HepG2 (cell line): ENCODE measurements at regions of chr9 and their contacts with region 1.

Region 1: GRCh38 chr9:83622939-83623678 is at the start of gene IDNK:
- DNase-seq: peak; percentile 67
- ATAC-seq: peak; percentile 87
- H3K4me3 ChIP-seq: peak within 1 kb of the TSS; percentile 73 to 94 (median 80)
- H3K27ac ChIP-seq: peak within 1 kb of the TSS; percentile 97
- H3K4me1 ChIP-seq: peaks cover 49% of the 10 kb centered on the region
- H3K27me3 ChIP-seq: no peaks in the 10 kb centered on the region
- CTCF ChIP-seq: peak; percentile 12; the same call in 1 of the 2 replicates
- EP300 ChIP-seq: no peak
- POLR2A ChIP-seq: peak; percentile 64 to 71
- RAD21 ChIP-seq: no peak
- total RNA-seq, gene IDNK: 4.8 and 6.3 TPM in 2 replicates

Region 2: GRCh38 chr9:83334320-83334719 is 288.8 kb before region 1 on chr9:
- CTCF ChIA-PET with region 1: no interaction called
- POLR2A ChIA-PET with region 1: no interaction called
- in situ Hi-C with region 1: no loop called
- intact Hi-C with region 1: loop called (anchors 1 kb)
- DNase-seq: peak; percentile 64
- ATAC-seq: peak; percentile 92
- H3K4me3 ChIP-seq: no peak overlapping the region
- H3K27ac ChIP-seq: no peak overlapping the region
- H3K4me1 ChIP-seq: no peaks in the 10 kb centered on the region
- H3K27me3 ChIP-seq: no peaks in the 10 kb centered on the region
- CTCF ChIP-seq: peak; percentile 91
- EP300 ChIP-seq: 0 out of 4 replicates have a peak, but pooled peaks of 1 of the 2 experiments have one; percentile 4
- POLR2A ChIP-seq: no peak
- RAD21 ChIP-seq: peak; percentile 93

Region 3: GRCh38 chr9:83538172-83538889 is 84.8 kb before region 1 on chr9 and contains the start of gene FRMD3:
- CTCF ChIA-PET with region 1: no interaction called
- POLR2A ChIA-PET with region 1: no interaction called
- in situ Hi-C with region 1: no loop called
- intact Hi-C with region 1: no loop called
- DNase-seq: peak; percentile 73
- ATAC-seq: peak; percentile 98
- H3K4me3 ChIP-seq: peak within 1 kb of the TSS; percentile 72 to 85 (median 77)
- H3K27ac ChIP-seq: peak within 1 kb of the TSS; percentile 57
- H3K4me1 ChIP-seq: peaks cover 38% of the 10 kb centered on the region
- H3K27me3 ChIP-seq: no peaks in the 10 kb centered on the region; a peak in 1 of 5 replicates
- CTCF ChIP-seq: peak; percentile 90
- EP300 ChIP-seq: no peak
- POLR2A ChIP-seq: no peak; a peak in 1 of 4 replicates
- RAD21 ChIP-seq: peak; percentile 91
- total RNA-seq, gene FRMD3: 7.7 and 9.6 TPM in 2 replicates

Region 4: DNA sequence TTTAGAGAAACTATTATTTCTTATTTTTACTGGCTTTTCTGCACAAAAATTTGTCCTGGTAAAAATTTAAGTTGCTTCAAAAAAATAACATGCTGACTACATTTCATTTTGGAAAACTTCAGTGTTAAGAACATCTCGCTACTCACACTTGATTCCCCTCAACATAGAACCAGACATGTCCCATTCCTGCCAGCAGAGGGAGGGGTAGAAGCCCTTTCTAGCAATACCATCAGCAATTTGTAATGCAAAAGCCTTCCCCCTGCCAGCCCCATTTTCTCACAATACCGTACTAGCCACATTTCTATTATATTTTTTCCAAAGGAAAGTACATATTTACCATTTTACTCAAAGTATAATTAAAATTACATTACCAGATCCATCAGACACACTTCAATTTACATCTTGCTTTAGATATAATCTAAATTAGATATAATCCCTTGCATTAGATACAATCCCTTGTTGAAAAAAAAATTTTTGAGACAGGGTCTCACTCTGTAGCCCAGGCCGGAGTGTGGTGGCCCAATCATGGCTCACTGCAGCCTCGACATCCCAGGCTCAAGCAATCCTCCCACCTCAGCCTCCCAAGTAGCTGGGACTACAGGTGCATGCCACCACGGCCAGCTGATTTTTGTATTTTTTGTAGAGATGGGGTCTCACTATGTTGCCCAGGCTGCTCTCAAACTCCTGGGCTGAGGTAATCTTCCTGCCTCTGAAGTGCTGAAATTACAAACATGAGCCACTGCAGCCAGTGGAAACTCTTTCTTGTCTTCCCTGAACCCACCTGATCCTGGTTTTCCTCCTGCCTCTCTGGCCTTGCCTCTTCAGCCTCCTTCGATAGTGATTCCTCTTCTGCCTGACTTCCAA is 39.7 kb before region 1 on chr9:
- CTCF ChIA-PET with region 1: no interaction called
- POLR2A ChIA-PET with region 1: no interaction called
- in situ Hi-C with region 1: no loop called
- intact Hi-C with region 1: loop called (anchors 2 kb)
- DNase-seq: peak; percentile 47
- ATAC-seq: peak; percentile 90
- H3K4me3 ChIP-seq: no peak overlapping the region
- H3K27ac ChIP-seq: no peak overlapping the region
- H3K4me1 ChIP-seq: no peaks in the 10 kb centered on the region
- H3K27me3 ChIP-seq: no peaks in the 10 kb centered on the region
- CTCF ChIP-seq: peak; percentile 74
- EP300 ChIP-seq: no peak
- POLR2A ChIP-seq: no peak
- RAD21 ChIP-seq: no peak

Region 5: DNA sequence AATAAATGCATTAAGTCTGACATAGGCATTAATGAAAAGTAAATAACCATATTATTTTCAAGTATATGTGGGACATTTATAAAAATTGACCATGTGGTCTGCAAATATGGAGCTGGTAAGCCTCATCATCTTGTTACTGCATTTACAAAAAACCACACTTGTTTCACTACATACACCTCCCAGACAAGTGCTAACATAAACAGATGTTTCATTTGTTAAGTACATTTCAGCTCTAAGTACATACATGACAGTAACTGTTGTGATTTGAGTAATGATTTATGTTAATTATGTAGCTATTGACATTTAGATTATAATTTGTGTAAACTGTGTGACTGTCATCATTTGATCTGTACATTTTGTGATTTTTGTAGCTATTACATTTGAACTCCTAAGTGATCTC is 13.7 kb after region 1 on chr9:
- CTCF ChIA-PET with region 1: no interaction called
- POLR2A ChIA-PET with region 1: interaction called, 12 read pairs
- in situ Hi-C with region 1: no loop called
- intact Hi-C with region 1: no loop called
- DNase-seq: no peak
- ATAC-seq: no peak
- H3K4me3 ChIP-seq: no peak overlapping the region
- H3K27ac ChIP-seq: no peak overlapping the region
- H3K4me1 ChIP-seq: peaks cover 23% of the 10 kb centered on the region
- H3K27me3 ChIP-seq: no peaks in the 10 kb centered on the region
- CTCF ChIP-seq: no peak
- EP300 ChIP-seq: no peak
- POLR2A ChIP-seq: no peak
- RAD21 ChIP-seq: no peak

Region 6: DNA sequence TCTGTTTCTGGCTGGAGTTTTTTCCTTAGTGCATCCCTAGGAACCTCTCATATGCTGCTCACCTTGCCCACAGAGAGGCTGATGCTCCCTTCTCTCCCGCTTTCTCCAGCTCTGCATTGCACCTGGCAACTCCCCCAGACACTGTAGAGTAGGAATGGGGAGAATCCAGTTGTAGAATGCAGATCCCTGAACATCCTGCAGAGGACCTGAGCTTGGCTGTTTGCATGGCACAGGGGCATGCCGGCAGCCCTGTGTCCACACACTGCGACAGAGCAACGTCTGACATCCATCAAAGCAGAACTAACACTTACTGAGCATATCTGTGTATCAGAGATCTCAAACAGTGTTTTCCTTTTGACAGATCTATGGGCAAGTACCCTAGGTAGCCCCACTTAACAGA is 19.7 kb after region 1 on chr9:
- CTCF ChIA-PET with region 1: interaction called, 51 read pairs
- POLR2A ChIA-PET with region 1: interaction called, 12 read pairs
- in situ Hi-C with region 1: no loop called
- intact Hi-C with region 1: no loop called
- DNase-seq: no peak
- ATAC-seq: peak; percentile 81
- H3K4me3 ChIP-seq: no peak overlapping the region
- H3K27ac ChIP-seq: no peak overlapping the region
- H3K4me1 ChIP-seq: peaks cover 3% of the 10 kb centered on the region
- H3K27me3 ChIP-seq: no peaks in the 10 kb centered on the region
- CTCF ChIP-seq: no peak
- EP300 ChIP-seq: no peak
- POLR2A ChIP-seq: no peak
- RAD21 ChIP-seq: no peak

Region 7: GRCh38 chr9:83649080-83649479 is 26.0 kb after region 1 on chr9:
- CTCF ChIA-PET with region 1: interaction called, 51 read pairs
- POLR2A ChIA-PET with region 1: interaction called, 16 read pairs
- in situ Hi-C with region 1: loop called (anchors 5 kb)
- intact Hi-C with region 1: loop called (anchors 1 kb)
- DNase-seq: peak; percentile 51
- ATAC-seq: peak; percentile 90
- H3K4me3 ChIP-seq: no peak overlapping the region
- H3K27ac ChIP-seq: no peak overlapping the region
- H3K4me1 ChIP-seq: no peaks in the 10 kb centered on the region
- H3K27me3 ChIP-seq: no peaks in the 10 kb centered on the region
- CTCF ChIP-seq: peak; percentile 93
- EP300 ChIP-seq: no peak
- POLR2A ChIP-seq: no peak
- RAD21 ChIP-seq: peak; percentile 85

Region 8: GRCh38 chr9:83688921-83689320 is 65.8 kb after region 1 on chr9:
- CTCF ChIA-PET with region 1: no interaction called
- POLR2A ChIA-PET with region 1: no interaction called
- in situ Hi-C with region 1: no loop called
- intact Hi-C with region 1: no loop called
- DNase-seq: no peak
- ATAC-seq: no peak
- H3K4me3 ChIP-seq: no peak overlapping the region
- H3K27ac ChIP-seq: no peak overlapping the region
- H3K4me1 ChIP-seq: no peaks in the 10 kb centered on the region
- H3K27me3 ChIP-seq: no peaks in the 10 kb centered on the region
- CTCF ChIP-seq: no peak
- EP300 ChIP-seq: no peak
- POLR2A ChIP-seq: no peak
- RAD21 ChIP-seq: no peak

Region 9: GRCh38 chr9:83707768-83708514 is 84.8 kb after region 1 on chr9 and contains the start of gene UBQLN1:
- CTCF ChIA-PET with region 1: no interaction called
- POLR2A ChIA-PET with region 1: interaction called, 7 read pairs
- in situ Hi-C with region 1: no loop called
- intact Hi-C with region 1: loop called (anchors 1 kb)
- DNase-seq: peak; percentile 88
- ATAC-seq: peak; percentile 88
- H3K4me3 ChIP-seq: peak within 1 kb of the TSS; percentile 82 to 99 (median 94)
- H3K27ac ChIP-seq: peak within 1 kb of the TSS; percentile 99
- H3K4me1 ChIP-seq: peaks cover 40% of the 10 kb centered on the region
- H3K27me3 ChIP-seq: no peaks in the 10 kb centered on the region
- CTCF ChIP-seq: peak; percentile 3; the same call in 1 of the 2 replicates
- EP300 ChIP-seq: peak in 1 of 2 experiments; percentile 40; a peak in 2 of 4 replicates
- POLR2A ChIP-seq: peak; percentile 87 to 96
- RAD21 ChIP-seq: peak; percentile 41; the same call in 1 of the 2 replicates
- total RNA-seq, gene UBQLN1: 83.8 and 99.6 TPM in 2 replicates